ENCODE measurements at regions of chr5 and their contacts with region 1.

Region 1: GRCh38 chr5:151110122-151110681 is 29.4 kb upstream of the TNIP1 start:
- DNase-seq: no peak
- ATAC-seq: peak; percentile 57

Region 2: DNA sequence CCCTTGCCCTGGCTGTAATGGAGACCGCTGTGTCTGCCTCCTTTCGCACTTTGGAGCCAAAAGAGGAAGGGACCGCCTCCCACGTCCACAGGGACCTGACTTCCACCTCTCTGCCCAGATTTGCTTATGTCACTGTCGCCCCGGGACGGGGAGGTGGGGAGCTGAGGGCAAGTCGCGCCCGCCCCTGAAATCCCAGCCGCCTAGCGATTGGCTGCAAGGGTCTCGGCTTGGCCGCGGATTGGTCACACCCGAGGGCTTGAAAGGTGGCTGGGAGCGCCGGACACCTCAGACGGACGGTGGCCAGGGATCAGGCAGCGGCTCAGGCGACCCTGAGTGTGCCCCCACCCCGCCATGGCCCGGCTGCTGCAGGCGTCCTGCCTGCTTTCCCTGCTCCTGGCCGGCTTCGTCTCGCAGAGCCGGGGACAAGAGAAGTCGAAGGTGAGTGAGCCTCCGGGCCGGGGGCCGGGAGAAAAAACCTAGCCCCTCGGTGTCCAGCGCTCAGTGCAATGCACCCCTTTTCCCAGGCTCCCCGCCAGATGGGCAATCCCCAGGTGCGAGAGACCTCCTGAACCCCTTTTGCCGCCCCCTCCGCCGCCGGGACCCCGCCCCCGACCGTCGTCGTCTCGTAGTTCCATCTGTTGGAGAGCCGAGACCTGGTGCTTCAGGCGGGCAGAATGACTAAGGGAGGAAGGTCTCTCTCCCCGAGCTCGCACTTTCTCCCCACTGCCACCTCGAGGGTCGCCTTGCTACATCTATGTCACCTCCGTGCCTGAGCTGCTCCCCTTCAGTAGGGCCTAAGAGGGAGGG is 89.7 kb before region 1 on chr5 and contains the start of gene GPX3:
- intact Hi-C with region 1: no loop called
- DNase-seq: peak; percentile 96
- ATAC-seq: peak; percentile 86
- total RNA-seq, gene GPX3: 537 TPM

Region 3: DNA sequence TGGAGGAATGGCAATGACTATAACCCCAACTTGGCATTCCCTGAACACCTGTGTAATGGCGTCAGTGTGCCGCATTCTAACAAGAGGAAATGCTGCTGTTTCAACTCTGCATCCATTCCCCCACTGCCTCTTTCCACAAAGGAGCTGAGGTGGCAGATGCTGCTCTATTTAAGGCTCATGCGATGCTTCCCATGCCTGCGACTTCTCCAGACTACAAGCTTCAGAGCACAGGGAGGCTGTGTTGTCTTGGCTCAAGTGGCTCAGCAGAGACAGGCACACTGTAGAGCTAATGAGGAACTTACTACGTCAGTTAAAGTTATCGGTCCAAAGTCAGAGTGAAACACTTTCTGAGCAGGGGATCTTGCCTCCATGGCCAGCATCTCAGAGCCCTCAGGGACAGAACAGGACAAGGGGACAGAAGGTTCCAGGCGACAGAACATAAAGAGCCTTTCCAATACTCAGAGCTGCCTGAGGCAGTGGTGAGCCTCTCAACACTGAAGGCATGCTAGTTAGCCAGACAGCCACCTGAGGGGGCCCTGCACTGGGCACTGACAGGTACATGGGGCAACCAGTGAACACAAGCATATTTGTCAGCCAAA is 51.2 kb before region 1 on chr5:
- intact Hi-C with region 1: loop called (anchors 5 kb)
- DNase-seq: no peak
- ATAC-seq: peak; percentile 21

Measured in left ventricle myocardium superior (tissue), 1 donor.